GM23248 (cell line): ENCODE measurements at regions of chr3 and their contacts with region 1.

Region 1: GRCh38 chr3:44198284-44199269 is 43.1 kb upstream of the TOPAZ1 start:
- DNase-seq: peak; percentile 84
- H3K4me3 ChIP-seq: no peak overlapping the region
- H3K27ac ChIP-seq: no peak overlapping the region
- H3K4me1 ChIP-seq: no peaks in the 10 kb centered on the region
- H3K27me3 ChIP-seq: peaks cover 4% of the 10 kb centered on the region

Region 2: GRCh38 chr3:43531835-43532234 is 666.7 kb before region 1 on chr3:
- in situ Hi-C with region 1: loop called (anchors 25 kb)
- DNase-seq: peak; percentile 94
- H3K4me3 ChIP-seq: no peak overlapping the region
- H3K27ac ChIP-seq: peak overlapping the region; percentile 68
- H3K4me1 ChIP-seq: peaks cover 12% of the 10 kb centered on the region
- H3K27me3 ChIP-seq: no peaks in the 10 kb centered on the region

Region 3: GRCh38 chr3:44482725-44483124 is 284.1 kb after region 1 on chr3:
- in situ Hi-C with region 1: no loop called
- DNase-seq: no peak
- H3K4me3 ChIP-seq: no peak overlapping the region
- H3K27ac ChIP-seq: no peak overlapping the region
- H3K4me1 ChIP-seq: no peaks in the 10 kb centered on the region; the same call in 1 of the 2 replicates
- H3K27me3 ChIP-seq: no peaks in the 10 kb centered on the region